CD4-positive, alpha-beta T cell (primary cell): ENCODE measurements at regions of chr9 and their contacts with region 1.

Region 1: GRCh38 chr9:9998491-9999287 is 614.1 kb downstream of the PTPRD start:
- DNase-seq: no peak
- ATAC-seq: no peak
- H3K4me3 ChIP-seq: no peak overlapping the region
- H3K4me3 Mint-ChIP-seq: no peak overlapping the region
- H3K27ac ChIP-seq: no peak overlapping the region
- H3K27ac Mint-ChIP-seq: no peak overlapping the region
- H3K4me1 ChIP-seq: no peaks in the 10 kb centered on the region
- H3K4me1 Mint-ChIP-seq: no peaks in the 10 kb centered on the region
- H3K27me3 ChIP-seq: no peaks in the 10 kb centered on the region
- H3K27me3 Mint-ChIP-seq: no peaks in the 10 kb centered on the region
- CTCF ChIP-seq: no peak

Region 2: DNA sequence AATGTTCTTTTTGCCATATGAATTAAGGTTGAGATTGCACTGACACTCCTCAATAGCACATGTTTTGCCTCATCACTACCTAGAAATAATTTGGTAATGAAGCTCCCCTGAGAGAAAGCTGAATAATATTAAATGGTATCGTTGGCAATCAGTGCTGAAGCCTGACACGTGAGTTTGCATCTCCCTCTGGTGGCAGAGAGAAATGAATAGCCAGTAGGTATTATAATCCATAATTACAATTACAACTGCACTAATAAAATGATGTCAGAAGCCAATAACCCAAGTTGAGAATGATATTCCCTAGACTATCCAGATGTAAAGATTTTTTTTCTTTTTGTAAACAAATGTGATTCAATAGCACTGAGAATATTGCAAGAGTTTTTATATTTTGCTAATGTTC is 86.2 kb before region 1 on chr9:
- CTCF ChIA-PET with region 1: no interaction called
- POLR2A ChIA-PET with region 1: no interaction called
- intact Hi-C with region 1: no loop called
- DNase-seq: no peak
- ATAC-seq: no peak
- H3K4me3 ChIP-seq: no peak overlapping the region
- H3K4me3 Mint-ChIP-seq: no peak overlapping the region
- H3K27ac ChIP-seq: no peak overlapping the region
- H3K27ac Mint-ChIP-seq: no peak overlapping the region
- H3K4me1 ChIP-seq: no peaks in the 10 kb centered on the region
- H3K4me1 Mint-ChIP-seq: no peaks in the 10 kb centered on the region
- H3K27me3 ChIP-seq: no peaks in the 10 kb centered on the region
- H3K27me3 Mint-ChIP-seq: no peaks in the 10 kb centered on the region
- CTCF ChIP-seq: no peak

Region 3: GRCh38 chr9:10014889-10015288 is 16.2 kb after region 1 on chr9:
- CTCF ChIA-PET with region 1: no interaction called
- POLR2A ChIA-PET with region 1: no interaction called
- intact Hi-C with region 1: loop called in 1 of 2 experiments (anchors 2 kb)
- DNase-seq: no peak
- ATAC-seq: no peak
- H3K4me3 ChIP-seq: no peak overlapping the region
- H3K4me3 Mint-ChIP-seq: no peak overlapping the region
- H3K27ac ChIP-seq: no peak overlapping the region
- H3K27ac Mint-ChIP-seq: no peak overlapping the region
- H3K4me1 ChIP-seq: no peaks in the 10 kb centered on the region
- H3K4me1 Mint-ChIP-seq: no peaks in the 10 kb centered on the region
- H3K27me3 ChIP-seq: no peaks in the 10 kb centered on the region
- H3K27me3 Mint-ChIP-seq: no peaks in the 10 kb centered on the region
- CTCF ChIP-seq: no peak

Region 4: GRCh38 chr9:10079284-10079964 is 80.7 kb after region 1 on chr9:
- CTCF ChIA-PET with region 1: no interaction called
- POLR2A ChIA-PET with region 1: no interaction called
- intact Hi-C with region 1: no loop called
- DNase-seq: no peak
- ATAC-seq: no peak
- H3K4me3 ChIP-seq: no peak overlapping the region
- H3K4me3 Mint-ChIP-seq: no peak overlapping the region
- H3K27ac ChIP-seq: no peak overlapping the region
- H3K27ac Mint-ChIP-seq: no peak overlapping the region
- H3K4me1 ChIP-seq: no peaks in the 10 kb centered on the region
- H3K4me1 Mint-ChIP-seq: no peaks in the 10 kb centered on the region
- H3K27me3 ChIP-seq: no peaks in the 10 kb centered on the region
- H3K27me3 Mint-ChIP-seq: no peaks in the 10 kb centered on the region
- CTCF ChIP-seq: no peak